Dendritic cell treated with granulocyte-macrophage colony-stimulating factor and Interleukin-4, amounts not matched to agents 40 ng/mL and 50 ng/mL, for 4 days (primary cell): ENCODE measurements at regions of chr2 and their contacts with region 1.

Region 1: DNA sequence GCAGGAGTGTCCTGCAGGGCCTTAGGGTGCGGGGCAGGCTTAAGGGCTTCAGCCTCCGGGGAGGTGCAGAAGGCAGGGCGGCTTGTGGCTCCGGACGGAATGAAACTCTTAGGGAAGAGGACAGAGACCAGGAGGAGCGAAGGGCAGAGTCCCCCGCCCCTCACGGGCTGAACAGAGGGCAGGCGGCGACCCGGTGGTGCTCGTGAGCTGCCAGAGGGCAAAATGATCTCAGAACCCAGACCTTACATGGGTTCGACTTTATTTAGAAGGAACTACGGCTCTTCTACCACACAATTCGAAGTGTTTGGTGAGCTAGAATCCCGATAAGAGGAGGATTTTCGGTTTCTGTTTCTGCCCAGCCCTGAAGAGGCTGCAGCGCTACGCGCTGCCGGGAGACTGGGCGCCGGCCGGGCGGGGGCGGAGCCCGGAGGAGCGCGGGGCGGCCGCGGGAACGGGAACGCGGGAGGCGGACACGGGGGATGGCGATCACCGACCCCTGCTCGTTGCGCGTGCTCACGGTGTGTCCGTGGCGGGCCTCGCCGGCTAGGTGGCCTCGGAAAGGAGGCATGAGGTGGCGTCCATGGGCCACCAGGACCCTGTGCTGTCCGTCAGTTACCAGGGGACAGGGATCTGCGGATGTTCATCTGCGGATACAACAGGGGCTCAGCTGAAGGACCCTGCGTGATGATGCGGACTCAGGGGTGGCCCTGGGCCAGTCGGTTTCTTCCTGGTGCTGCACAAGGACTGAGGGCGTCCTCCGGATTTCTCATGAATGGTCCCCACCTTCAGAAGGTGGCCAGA is 4.2 kb upstream of the SP100 start:
- H3K4me3 Mint-ChIP-seq: peak overlapping the region; percentile 94
- H3K27ac Mint-ChIP-seq: peak overlapping the region; percentile 96
- H3K4me1 Mint-ChIP-seq: peaks cover 66% of the 10 kb centered on the region
- H3K27me3 Mint-ChIP-seq: peaks cover 5% of the 10 kb centered on the region

Region 2: DNA sequence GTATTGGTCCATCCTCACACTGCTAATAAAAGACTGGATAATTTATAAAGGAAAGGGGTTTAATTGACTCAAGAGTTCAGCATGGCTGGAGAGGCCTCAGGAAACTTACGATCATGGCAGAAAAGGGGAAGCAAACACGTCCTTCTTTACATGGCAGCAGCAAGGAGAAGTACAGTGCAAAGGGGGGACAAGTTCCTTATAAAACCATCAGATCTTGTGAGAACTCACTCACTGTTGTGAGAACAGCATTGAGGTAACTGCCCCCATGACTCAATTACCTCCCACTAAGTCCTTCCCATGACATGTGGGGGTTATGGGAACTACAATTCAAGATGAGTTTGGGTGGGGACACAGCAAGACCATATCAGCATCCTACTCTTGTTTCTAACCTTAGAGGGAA is 41.2 kb after region 1 on chr2:
- intact Hi-C with region 1: loop called (anchors 5 kb)
- H3K4me3 Mint-ChIP-seq: no peak overlapping the region
- H3K27ac Mint-ChIP-seq: no peak overlapping the region
- H3K4me1 Mint-ChIP-seq: peaks cover 52% of the 10 kb centered on the region
- H3K27me3 Mint-ChIP-seq: no peaks in the 10 kb centered on the region

Region 3: DNA sequence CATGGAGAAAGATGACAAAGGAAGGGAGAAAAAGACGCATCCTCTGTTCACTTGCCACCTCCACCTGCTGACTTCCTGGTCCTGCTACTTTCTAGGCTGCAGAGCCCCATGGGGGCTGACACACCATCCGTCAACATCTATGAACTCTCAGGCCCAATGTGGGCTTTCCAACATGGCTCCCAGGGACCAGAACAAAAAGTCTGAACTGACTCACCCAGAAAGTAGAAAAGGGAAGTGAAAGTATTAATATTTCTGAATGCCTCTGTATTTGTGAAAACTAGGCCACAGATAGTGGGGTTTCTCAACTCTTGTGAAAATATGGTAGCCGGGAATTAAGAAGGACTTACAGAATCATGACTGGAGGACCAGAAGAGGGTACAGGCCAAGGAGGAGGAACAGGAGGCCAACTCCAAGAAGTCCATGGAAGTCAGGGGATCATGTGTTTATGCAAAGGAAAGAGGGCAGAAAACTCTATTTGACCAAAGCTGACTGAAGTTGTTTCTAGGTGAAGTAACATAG is 177.8 kb after region 1 on chr2:
- intact Hi-C with region 1: no loop called
- H3K4me3 Mint-ChIP-seq: no peak overlapping the region
- H3K27ac Mint-ChIP-seq: peak overlapping the region; percentile 54
- H3K4me1 Mint-ChIP-seq: peaks cover 15% of the 10 kb centered on the region
- H3K27me3 Mint-ChIP-seq: peaks cover 19% of the 10 kb centered on the region